CD4-positive, alpha-beta memory T cell (primary cell): ENCODE measurements at regions of chr2 and their contacts with region 1.

Region 1: DNA sequence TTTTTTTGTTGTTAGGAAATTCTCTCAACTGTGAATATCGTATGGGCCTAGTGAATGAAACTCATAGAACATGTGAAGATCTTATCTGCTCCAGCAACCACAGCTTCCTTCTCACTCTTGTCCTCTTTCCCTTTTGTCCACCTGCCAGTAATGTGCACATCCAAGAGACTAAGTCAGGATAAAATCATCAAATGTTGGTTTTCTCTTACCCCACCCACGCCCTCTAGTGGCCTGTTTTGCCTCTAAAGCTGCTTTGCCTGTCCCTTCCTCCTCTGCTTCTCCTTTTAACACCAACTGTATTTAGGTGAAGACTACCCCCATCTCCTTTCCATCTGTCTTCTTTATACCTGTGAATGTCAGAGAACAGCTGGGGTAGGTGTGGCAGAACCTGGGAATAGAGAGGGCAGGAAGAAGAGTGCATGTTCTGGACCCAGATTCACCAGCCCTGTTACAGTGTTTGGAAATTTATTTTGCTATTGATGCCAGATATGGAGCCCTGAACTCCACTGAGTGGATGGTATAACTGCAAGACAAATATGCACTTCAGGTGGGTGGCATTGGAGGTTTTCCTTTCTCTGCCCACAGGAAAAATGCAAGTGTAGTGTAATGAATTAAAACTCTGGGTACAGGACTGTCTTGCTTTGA is 8.4 kb upstream of the MGAT5 start:
- DNase-seq: peak; percentile 66 to 79 (median 69)
- H3K4me3 ChIP-seq: no peak overlapping the region
- H3K4me3 Mint-ChIP-seq: peak overlapping the region in 7 of 8 donors; percentile 37 to 73 (median 65)
- H3K27ac ChIP-seq: no peak overlapping the region
- H3K27ac Mint-ChIP-seq: peak overlapping the region; percentile 13 to 88 (median 81)
- H3K4me1 ChIP-seq: peaks cover 99% of the 10 kb centered on the region
- H3K4me1 Mint-ChIP-seq: peaks cover 70 to 97% (median 87%) of the 10 kb centered on the region in 4 donors
- H3K27me3 ChIP-seq: no peaks in the 10 kb centered on the region
- H3K27me3 Mint-ChIP-seq: no peaks in the 10 kb centered on the region

Region 2: GRCh38 chr2:133886735-133887660 is 358.5 kb before region 1 on chr2:
- CTCF ChIA-PET with region 1: interaction called, 19 read pairs
- POLR2A ChIA-PET with region 1: no interaction called
- intact Hi-C with region 1: loop called (anchors 1 kb)
- DNase-seq: peak; percentile 43 to 50 (median 50)
- H3K4me3 ChIP-seq: no peak overlapping the region
- H3K4me3 Mint-ChIP-seq: no peak overlapping the region
- H3K27ac ChIP-seq: no peak overlapping the region
- H3K27ac Mint-ChIP-seq: no peak overlapping the region
- H3K4me1 ChIP-seq: no peaks in the 10 kb centered on the region
- H3K4me1 Mint-ChIP-seq: peaks cover 0 to 2% (median under 1%) of the 10 kb centered on the region in 4 donors
- H3K27me3 ChIP-seq: no peaks in the 10 kb centered on the region
- H3K27me3 Mint-ChIP-seq: peaks cover 0 to 7% of the 10 kb centered on the region in 2 donors

Region 3: DNA sequence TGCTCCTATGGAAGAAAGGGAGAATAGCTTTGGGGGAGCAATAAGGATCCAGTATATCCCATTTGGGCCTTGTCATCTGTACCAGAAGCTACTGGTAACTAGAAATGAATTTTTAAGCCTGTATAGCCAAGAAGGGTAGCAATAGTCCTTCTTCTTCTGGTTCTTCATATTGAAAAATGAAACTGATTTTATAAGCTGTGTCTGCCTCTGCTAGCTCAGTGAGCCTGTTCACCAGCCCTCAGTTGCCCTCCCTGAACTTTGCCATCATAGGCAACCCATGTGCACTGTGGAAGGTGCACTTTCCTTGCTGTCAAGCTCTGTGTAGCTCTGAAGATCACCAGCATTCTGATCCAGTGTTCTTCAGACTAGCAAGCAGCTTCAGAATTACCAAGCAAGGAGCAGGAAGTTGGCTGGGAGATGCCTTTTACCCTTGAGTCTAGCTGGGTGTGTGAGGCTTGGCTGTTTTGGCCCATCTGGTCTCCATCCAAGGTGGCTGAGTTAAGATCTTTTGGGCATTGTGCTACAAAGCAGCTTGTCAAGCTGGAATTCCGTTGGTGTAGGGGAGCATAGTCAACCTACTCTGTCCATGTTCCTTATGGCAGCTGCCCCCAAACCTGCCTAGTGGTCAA is 47.3 kb before region 1 on chr2:
- CTCF ChIA-PET with region 1: interaction called, 76 read pairs
- POLR2A ChIA-PET with region 1: no interaction called
- intact Hi-C with region 1: no loop called
- DNase-seq: no peak
- H3K4me3 ChIP-seq: no peak overlapping the region
- H3K4me3 Mint-ChIP-seq: peak overlapping the region; percentile 18 to 82 (median 74)
- H3K27ac ChIP-seq: no peak overlapping the region
- H3K27ac Mint-ChIP-seq: peak overlapping the region; percentile 72 to 88 (median 83)
- H3K4me1 ChIP-seq: peaks cover 87% of the 10 kb centered on the region
- H3K4me1 Mint-ChIP-seq: peaks cover 73 to 94% (median 84%) of the 10 kb centered on the region in 4 donors
- H3K27me3 ChIP-seq: no peaks in the 10 kb centered on the region
- H3K27me3 Mint-ChIP-seq: no peaks in the 10 kb centered on the region

Region 4: DNA sequence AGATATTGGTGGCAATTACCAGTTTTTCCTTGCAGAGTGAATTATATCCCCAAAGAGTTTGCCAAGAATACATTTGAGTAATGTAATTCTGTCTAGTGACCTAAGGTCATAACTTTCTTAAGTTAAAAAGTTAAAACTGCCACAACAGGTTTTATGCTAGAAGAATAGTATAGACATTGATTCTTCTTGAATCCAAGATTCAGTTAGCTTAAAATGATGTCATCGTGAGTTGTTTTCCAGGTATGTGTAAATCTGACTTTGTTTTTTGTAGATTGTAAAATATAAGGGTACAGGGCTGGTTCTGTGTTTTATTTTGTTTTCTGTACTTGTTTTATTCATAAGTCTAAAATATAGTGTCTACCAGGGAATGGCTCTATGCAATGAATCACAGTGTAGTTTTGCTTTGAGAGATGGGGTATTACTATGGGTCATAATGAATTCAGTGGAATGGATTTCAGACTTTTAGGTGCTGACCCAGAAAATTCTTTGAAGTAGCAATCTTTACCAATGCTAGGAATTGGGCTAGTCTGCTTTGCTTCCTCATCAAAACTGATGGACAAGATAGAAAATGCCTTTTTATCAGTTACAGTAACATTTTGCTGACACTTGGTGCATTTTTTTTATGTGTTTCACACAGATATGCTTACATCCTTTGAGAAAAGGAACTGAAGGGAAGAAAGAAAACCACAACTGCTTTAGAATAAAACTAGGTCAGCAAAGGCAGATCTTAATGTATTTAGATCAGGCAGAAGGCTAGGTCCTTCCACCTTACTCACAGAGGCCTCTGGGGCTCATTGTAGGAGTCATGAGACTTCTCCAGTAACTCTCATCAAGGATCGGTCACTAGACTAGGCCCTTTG is 12.4 kb before region 1 on chr2:
- CTCF ChIA-PET with region 1: interaction called, 133 read pairs
- POLR2A ChIA-PET with region 1: interaction called, 14 read pairs
- intact Hi-C with region 1: loop called (anchors 1 kb)
- DNase-seq: peak; percentile 65 to 77 (median 69)
- H3K4me3 ChIP-seq: peak overlapping the region in 1 of 2 donors; percentile 30
- H3K4me3 Mint-ChIP-seq: peak overlapping the region; percentile 56 to 86 (median 78)
- H3K27ac ChIP-seq: peak overlapping the region; percentile 55
- H3K27ac Mint-ChIP-seq: peak overlapping the region; percentile 83 to 97 (median 92)
- H3K4me1 ChIP-seq: peaks cover 94% of the 10 kb centered on the region
- H3K4me1 Mint-ChIP-seq: peaks cover 75 to 94% (median 87%) of the 10 kb centered on the region in 4 donors
- H3K27me3 ChIP-seq: no peaks in the 10 kb centered on the region
- H3K27me3 Mint-ChIP-seq: no peaks in the 10 kb centered on the region

Region 5: DNA sequence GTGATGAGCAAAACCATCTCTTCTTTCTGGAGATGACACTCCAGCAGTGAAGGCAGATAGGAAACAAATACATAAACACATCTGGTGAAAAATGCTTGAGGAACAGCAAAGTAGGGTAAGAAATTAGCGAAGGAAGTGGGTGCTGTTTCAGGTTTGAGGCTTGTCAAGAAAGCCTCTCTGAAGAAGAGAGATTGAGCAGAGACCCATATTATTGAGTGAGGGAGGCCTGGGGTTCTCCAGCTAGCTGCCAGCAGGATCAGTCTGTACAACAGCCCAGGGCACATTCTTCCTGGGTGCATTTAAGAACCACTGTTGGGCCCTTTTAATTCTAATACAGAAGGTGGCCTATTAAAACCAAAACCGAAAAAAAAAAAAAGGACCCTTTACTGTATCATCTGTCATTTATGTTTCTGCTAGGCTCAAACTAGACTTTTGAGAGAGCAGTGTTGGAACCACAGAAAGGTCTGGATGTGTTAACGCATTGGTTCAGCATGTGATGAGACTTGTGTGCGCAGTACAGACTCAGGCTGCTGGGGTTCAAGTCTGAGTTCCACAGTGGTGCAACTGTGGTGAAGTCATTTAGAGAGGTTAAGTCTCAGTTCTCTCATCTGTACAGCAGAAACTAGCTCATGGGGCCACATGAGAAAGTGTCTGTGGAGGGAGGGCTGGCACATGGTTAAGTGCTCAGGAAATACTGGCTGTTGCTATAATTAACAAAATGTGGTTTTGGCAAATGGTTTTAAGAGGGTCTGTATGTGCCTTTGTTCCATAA is 37.4 kb after region 1 on chr2:
- CTCF ChIA-PET with region 1: interaction called, 11 read pairs
- POLR2A ChIA-PET with region 1: no interaction called
- intact Hi-C with region 1: no loop called
- DNase-seq: peak in 4 of 5 donors; percentile 26 to 50 (median 40)
- H3K4me3 ChIP-seq: no peak overlapping the region
- H3K4me3 Mint-ChIP-seq: peak overlapping the region in 7 of 8 donors; percentile 21 to 84 (median 74)
- H3K27ac ChIP-seq: peak overlapping the region; percentile 27
- H3K27ac Mint-ChIP-seq: peak overlapping the region; percentile 76 to 92 (median 88)
- H3K4me1 ChIP-seq: peaks cover 71% of the 10 kb centered on the region
- H3K4me1 Mint-ChIP-seq: peaks cover 63 to 71% (median 66%) of the 10 kb centered on the region in 4 donors
- H3K27me3 ChIP-seq: no peaks in the 10 kb centered on the region
- H3K27me3 Mint-ChIP-seq: no peaks in the 10 kb centered on the region

Region 6: GRCh38 chr2:134411828-134412638 is 166.6 kb after region 1 on chr2:
- CTCF ChIA-PET with region 1: interaction called, 39 read pairs
- POLR2A ChIA-PET with region 1: interaction called, 3 read pairs
- intact Hi-C with region 1: loop called (anchors 1 kb)
- DNase-seq: peak; percentile 68 to 77 (median 73)
- H3K4me3 ChIP-seq: no peak overlapping the region
- H3K4me3 Mint-ChIP-seq: peak overlapping the region in 4 of 8 donors; percentile 6 to 18 (median 14)
- H3K27ac ChIP-seq: no peak overlapping the region
- H3K27ac Mint-ChIP-seq: peak overlapping the region in 6 of 7 donors; percentile 36 to 83 (median 56)
- H3K4me1 ChIP-seq: peaks cover 51% of the 10 kb centered on the region
- H3K4me1 Mint-ChIP-seq: peaks cover 48 to 56% (median 54%) of the 10 kb centered on the region in 4 donors
- H3K27me3 ChIP-seq: no peaks in the 10 kb centered on the region
- H3K27me3 Mint-ChIP-seq: no peaks in the 10 kb centered on the region